ENCODE measurements at regions of chr9 and their contacts with region 1.

Region 1: GRCh38 chr9:77673941-77674791 is 26.0 kb upstream of the GNA14 start:
- DNase-seq: no peak

Region 2: DNA sequence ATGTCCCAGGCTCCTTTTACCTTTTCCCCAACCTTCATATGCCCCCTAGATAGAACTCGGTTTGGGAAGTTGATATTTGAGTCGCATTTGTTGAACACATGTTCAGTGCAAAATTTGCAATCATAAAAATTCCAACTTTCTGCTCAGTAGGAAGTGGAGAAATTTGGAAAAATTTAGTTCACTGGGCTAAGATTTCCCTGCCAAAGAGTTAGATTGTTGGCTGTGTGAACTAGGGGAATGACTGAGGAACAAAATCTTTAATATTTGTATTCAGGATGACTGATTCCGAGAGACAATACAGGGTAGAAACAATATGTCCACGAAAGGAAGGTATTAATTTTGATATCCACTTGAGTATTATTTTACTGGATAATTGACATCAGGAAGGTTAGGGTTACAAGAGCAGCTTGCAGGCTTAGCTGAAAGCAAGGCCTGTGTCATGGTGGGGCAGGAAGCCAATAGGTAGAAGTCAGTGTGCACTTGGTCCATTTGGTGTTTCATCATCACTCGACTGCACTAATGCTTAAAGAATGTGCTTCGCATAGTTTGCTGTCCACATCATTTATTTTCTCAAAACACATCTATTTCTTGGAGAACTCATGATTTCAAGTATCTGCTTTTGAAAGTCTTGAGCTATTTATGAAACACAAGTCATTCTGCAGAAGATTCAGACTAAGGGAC is 33.4 kb after region 1 on chr9:
- intact Hi-C with region 1: loop called in 1 of 2 experiments (anchors 1 kb)
- DNase-seq: peak; percentile 85

Region 3: GRCh38 chr9:79201636-79202035 is 1527.5 kb after region 1 on chr9:
- intact Hi-C with region 1: loop called in 1 of 2 experiments (anchors 10 kb)
- DNase-seq: no peak